ENCODE measurements at regions of chr2 and their contacts with region 1.

Region 1: GRCh38 chr2:8491296-8492027 is 190.4 kb upstream of the ID2 start:
- DNase-seq: no peak
- ATAC-seq: no peak
- H3K4me3 ChIP-seq: no peak overlapping the region
- H3K27ac ChIP-seq: no peak overlapping the region
- H3K4me1 ChIP-seq: no peaks in the 10 kb centered on the region
- H3K27me3 ChIP-seq: peaks cover 0 to 2% (median 0%) of the 10 kb centered on the region in 3 donors
- CTCF ChIP-seq: no peak

Region 2: DNA sequence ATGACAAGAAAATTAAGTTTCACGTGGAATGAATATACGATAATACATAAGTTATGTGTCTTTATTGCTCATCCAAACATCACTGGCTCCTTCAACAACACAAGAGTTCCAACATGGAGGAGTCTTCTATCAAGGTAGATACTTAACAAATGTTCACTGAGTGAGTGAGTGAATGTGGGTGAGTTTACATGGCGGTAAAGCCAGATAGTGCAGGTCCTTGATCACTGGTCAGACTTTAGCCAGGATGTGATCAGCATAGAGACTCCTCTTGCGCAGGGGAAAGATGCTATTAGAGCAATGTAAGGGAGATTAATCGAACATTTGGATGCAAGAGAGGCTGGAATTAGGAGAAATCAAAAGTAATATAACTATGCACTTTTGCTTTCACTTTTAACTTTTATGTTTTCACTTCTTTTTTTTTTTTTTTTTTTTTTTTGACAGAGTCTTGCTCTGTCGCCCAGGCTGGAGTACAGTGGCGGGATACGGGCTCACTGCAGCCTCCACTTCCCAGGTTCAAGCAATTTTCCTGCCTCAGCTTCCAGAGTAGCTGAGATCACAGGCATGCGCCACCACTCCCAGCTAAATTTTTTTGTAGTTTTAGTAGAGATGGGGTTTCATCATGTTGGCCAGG is 58.6 kb before region 1 on chr2:
- intact Hi-C with region 1: no loop called
- DNase-seq: no peak
- ATAC-seq: no peak
- H3K4me3 ChIP-seq: no peak overlapping the region
- H3K27ac ChIP-seq: no peak overlapping the region
- H3K4me1 ChIP-seq: no peaks in the 10 kb centered on the region
- H3K27me3 ChIP-seq: no peaks in the 10 kb centered on the region
- CTCF ChIP-seq: no peak

Region 3: GRCh38 chr2:8508766-8509165 is 17.3 kb after region 1 on chr2:
- intact Hi-C with region 1: loop called in 1 of 2 experiments (anchors 1 kb)
- DNase-seq: no peak
- ATAC-seq: no peak
- H3K4me3 ChIP-seq: no peak overlapping the region
- H3K27ac ChIP-seq: no peak overlapping the region
- H3K4me1 ChIP-seq: no peaks in the 10 kb centered on the region
- H3K27me3 ChIP-seq: no peaks in the 10 kb centered on the region
- CTCF ChIP-seq: no peak